ENCODE measurements at regions of chr21 and their contacts with region 1.

Region 1: DNA sequence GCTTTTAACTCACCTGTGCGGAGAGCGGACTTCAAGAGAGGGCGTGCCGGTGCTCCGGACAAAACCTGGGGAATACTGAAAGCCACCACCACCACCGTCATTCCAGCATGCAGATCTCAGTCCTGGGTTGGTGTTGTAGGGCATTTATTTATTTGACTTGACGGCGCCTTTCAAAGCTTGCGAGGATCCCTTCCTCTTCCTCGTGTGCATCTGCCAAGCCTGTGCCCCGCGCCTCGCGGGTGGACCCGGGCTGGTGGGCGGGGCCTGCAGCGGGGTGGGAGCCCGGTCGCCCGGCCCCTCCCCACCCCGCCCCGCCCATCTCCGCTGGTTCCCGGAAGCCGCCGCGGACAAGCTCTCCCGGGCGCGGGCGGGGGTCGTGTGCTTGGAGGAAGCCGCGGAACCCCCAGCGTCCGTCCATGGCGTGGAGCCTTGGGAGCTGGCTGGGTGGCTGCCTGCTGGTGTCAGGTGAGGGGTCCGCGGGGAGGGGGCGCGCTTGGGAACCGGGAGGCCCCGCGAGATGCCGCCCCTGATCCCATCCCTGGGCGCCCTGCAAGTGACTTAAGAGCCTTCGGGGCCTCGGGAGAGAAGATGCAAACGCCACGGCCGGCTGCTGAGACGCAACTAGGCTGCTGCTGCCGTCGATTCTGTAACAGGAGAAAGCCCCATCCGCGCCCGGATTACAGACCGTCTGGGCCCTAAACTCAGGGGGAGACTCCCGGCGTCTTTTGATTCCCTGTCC is at the start of gene IL10RB:
- DNase-seq: peak; percentile 32 to 47
- ATAC-seq: peak; percentile 80
- H3K4me3 ChIP-seq: peak within 1 kb of the TSS; percentile 73 to 91 (median 86)
- H3K27ac ChIP-seq: peak within 1 kb of the TSS; percentile 82 to 84 (median 83)
- H3K4me1 ChIP-seq: peaks cover 17 to 28% of the 10 kb centered on the region in 2 donors
- H3K27me3 ChIP-seq: no peaks in the 10 kb centered on the region
- CTCF ChIP-seq: no peak
- POLR2A ChIP-seq: peak; percentile 45 to 53
- total RNA-seq, gene IL10RB: 11.4 to 17.1 (median 14.0) TPM

Region 2: GRCh38 chr21:33089398-33090119 is 176.7 kb before region 1 on chr21:
- in situ Hi-C with region 1: no loop called
- intact Hi-C with region 1: no loop called
- DNase-seq: peak; percentile 21 to 27
- ATAC-seq: no peak
- H3K4me3 ChIP-seq: no peak overlapping the region
- H3K27ac ChIP-seq: no peak overlapping the region
- H3K4me1 ChIP-seq: no peaks in the 10 kb centered on the region
- H3K27me3 ChIP-seq: no peaks in the 10 kb centered on the region
- CTCF ChIP-seq: no peak
- POLR2A ChIP-seq: no peak

Region 3: DNA sequence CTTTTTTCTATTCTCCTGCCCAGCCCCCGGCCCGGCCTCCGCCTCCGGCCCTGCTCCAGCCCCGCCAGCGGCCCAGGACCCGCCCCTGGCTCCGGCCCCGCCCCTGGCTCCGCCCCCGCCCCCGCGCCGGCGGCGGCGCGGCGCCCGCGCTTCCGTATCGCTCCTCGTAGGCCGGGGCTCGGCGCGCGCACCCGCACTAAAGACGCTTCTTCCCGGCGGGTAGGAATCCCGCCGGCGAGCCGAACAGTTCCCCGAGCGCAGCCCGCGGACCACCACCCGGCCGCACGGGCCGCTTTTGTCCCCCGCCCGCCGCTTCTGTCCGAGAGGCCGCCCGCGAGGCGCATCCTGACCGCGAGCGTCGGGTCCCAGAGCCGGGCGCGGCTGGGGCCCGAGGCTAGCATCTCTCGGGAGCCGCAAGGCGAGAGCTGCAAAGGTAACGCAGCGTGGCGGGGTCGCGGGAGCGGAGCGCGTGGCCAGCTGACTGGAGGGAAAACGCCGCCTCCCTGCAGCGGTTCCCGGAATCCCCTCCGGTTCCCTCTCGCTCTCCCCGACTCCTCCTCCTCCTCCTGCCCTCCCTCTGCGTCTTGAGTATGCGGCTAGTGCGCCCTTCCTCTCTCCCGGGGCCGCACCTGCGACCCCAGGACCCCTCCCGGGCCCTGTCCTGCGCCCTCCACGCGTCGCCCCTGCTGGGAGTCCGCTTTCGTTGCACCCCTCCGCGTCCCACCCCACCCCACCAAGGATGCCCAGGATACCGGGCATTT is 36.3 kb before region 1 on chr21 and contains the start of gene IFNAR2:
- in situ Hi-C with region 1: no loop called
- intact Hi-C with region 1: loop called (anchors 1 kb)
- DNase-seq: peak; percentile 21 to 60
- ATAC-seq: peak; percentile 95
- H3K4me3 ChIP-seq: peak within 1 kb of the TSS; percentile 77 to 99 (median 88)
- H3K27ac ChIP-seq: peak within 1 kb of the TSS; percentile 81 to 94 (median 89)
- H3K4me1 ChIP-seq: peaks cover 26 to 39% of the 10 kb centered on the region in 2 donors
- H3K27me3 ChIP-seq: no peaks in the 10 kb centered on the region
- CTCF ChIP-seq: no peak
- POLR2A ChIP-seq: peak; percentile 78 to 84
- total RNA-seq, gene IFNAR2: 3.4 to 8.0 (median 4.7) TPM

Region 4: GRCh38 chr21:33449616-33450015 is 183.4 kb after region 1 on chr21:
- in situ Hi-C with region 1: no loop called
- intact Hi-C with region 1: loop called (anchors 5 kb)
- DNase-seq: no peak
- ATAC-seq: no peak
- H3K4me3 ChIP-seq: no peak overlapping the region
- H3K27ac ChIP-seq: no peak overlapping the region
- H3K4me1 ChIP-seq: no peaks in the 10 kb centered on the region
- H3K27me3 ChIP-seq: no peaks in the 10 kb centered on the region
- CTCF ChIP-seq: no peak
- POLR2A ChIP-seq: no peak